Activated CD4-positive, alpha-beta T cell treated with anti-CD3 and anti-CD28 coated beads, Interleukin-2, amount 10 ng/mL, durations not matched to agents 24 days and 14 days (primary cell): ENCODE measurements at regions of chr14 and their contacts with region 1.

Region 1: DNA sequence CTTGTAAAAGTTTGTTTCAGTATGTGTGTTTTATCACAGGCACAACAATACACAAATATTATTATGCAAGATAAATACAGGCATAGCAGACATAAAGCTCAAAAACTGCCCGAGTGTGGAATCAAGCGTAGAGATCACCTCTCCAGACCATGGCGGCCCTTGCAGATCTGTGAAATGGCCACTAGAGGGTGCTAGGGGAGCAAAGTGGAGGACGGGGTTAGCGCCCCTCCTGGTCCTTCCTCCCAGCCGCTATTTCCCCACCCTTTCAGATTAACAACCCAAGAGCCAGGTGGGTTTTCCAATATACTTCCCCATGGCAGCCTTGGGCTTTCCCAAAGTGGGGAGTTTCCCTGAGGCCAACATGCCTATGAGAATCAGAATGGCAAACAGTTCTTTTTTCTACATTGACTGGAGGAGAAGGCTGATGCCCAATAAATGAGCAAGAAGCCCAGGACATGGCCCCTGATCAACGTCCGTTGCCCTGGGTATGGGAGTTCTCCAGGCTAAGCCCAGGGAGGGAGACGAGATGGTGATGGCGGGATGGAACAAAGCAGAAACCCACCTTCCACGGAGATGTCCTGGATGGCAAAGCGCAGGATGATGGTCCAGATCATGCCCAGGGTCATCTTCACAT is 67.4 kb downstream of the ACTN1 start:
- DNase-seq: peak; percentile 94
- H3K4me3 Mint-ChIP-seq: no peak overlapping the region
- H3K27ac Mint-ChIP-seq: no peak overlapping the region
- H3K4me1 Mint-ChIP-seq: peaks cover 11% of the 10 kb centered on the region
- H3K27me3 Mint-ChIP-seq: no peaks in the 10 kb centered on the region

Region 2: GRCh38 chr14:68979021-68979782 is 67.5 kb after region 1 on chr14 and contains the start of gene ACTN1:
- intact Hi-C with region 1: loop called (anchors 2 kb)
- DNase-seq: peak; percentile 84
- H3K4me3 Mint-ChIP-seq: peak within 1 kb of the TSS; percentile 85
- H3K27ac Mint-ChIP-seq: peak within 1 kb of the TSS; percentile 62
- H3K4me1 Mint-ChIP-seq: peaks cover 26% of the 10 kb centered on the region
- H3K27me3 Mint-ChIP-seq: peaks cover 29% of the 10 kb centered on the region
- total RNA-seq, gene ACTN1: 44.9 and 52.6 TPM in 2 replicates

Region 3: DNA sequence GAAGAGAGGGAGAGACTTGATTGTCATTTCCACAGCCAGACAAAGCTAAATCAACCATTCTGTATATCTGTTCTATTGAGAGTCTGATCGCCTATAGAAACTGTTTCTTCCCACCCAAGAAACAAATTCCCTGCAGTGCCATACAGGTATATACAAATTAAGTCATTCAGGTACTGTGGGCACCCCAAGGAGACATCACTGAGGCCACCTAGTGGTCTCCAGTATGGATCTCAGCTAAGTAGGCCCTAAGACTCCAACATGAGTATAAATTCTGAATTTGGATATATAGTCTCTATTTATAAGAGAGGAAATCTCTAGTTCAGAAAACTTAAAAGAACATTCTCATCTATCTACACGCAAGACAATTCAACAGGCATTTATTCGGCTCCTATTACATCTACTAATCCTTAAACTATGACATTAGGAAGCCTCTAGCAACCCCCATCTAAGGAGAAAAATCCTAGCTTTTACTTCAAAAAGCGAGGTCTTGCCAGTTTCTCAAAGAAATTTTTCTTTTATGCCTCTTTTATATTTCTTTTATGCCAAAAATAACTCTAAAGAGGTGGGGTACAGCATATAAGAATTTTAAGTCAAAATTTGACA is 178.6 kb after region 1 on chr14:
- intact Hi-C with region 1: loop called (anchors 1 kb)
- DNase-seq: peak; percentile 75
- H3K4me3 Mint-ChIP-seq: no peak overlapping the region
- H3K27ac Mint-ChIP-seq: no peak overlapping the region
- H3K4me1 Mint-ChIP-seq: peaks cover 6% of the 10 kb centered on the region
- H3K27me3 Mint-ChIP-seq: no peaks in the 10 kb centered on the region

Region 4: DNA sequence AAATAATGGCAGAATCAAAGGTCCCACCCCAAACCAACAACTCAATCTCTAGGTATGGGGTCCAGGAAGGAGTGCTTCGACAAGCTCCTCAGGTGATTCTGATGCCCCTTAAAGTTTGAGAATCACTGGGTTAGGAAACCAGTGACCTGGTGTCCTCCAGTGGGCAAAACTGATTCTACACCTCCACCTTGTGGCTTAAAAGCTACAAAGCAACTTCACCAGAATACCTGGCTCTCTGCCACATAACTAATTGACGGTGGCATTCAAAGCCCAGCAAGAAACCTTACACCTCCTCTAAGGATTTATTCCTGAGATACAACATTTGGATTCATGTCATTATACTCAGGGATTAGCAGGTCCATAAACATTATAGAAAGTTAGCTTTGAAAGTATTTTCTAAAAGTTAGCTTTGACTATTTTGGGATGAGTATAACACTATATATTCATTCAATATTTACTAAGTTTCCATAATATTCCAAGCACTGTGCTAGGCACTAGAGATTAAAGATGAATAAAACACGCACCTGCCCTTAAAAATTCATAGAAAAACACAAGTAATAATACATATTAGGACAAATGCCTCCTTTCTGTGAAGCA is 195.8 kb after region 1 on chr14:
- intact Hi-C with region 1: loop called (anchors 1 kb)
- DNase-seq: peak; percentile 79
- H3K4me3 Mint-ChIP-seq: no peak overlapping the region
- H3K27ac Mint-ChIP-seq: no peak overlapping the region
- H3K4me1 Mint-ChIP-seq: no peaks in the 10 kb centered on the region
- H3K27me3 Mint-ChIP-seq: no peaks in the 10 kb centered on the region